HCT116 (cell line): ENCODE measurements at regions of chr6 and their contacts with region 1.

Region 1: DNA sequence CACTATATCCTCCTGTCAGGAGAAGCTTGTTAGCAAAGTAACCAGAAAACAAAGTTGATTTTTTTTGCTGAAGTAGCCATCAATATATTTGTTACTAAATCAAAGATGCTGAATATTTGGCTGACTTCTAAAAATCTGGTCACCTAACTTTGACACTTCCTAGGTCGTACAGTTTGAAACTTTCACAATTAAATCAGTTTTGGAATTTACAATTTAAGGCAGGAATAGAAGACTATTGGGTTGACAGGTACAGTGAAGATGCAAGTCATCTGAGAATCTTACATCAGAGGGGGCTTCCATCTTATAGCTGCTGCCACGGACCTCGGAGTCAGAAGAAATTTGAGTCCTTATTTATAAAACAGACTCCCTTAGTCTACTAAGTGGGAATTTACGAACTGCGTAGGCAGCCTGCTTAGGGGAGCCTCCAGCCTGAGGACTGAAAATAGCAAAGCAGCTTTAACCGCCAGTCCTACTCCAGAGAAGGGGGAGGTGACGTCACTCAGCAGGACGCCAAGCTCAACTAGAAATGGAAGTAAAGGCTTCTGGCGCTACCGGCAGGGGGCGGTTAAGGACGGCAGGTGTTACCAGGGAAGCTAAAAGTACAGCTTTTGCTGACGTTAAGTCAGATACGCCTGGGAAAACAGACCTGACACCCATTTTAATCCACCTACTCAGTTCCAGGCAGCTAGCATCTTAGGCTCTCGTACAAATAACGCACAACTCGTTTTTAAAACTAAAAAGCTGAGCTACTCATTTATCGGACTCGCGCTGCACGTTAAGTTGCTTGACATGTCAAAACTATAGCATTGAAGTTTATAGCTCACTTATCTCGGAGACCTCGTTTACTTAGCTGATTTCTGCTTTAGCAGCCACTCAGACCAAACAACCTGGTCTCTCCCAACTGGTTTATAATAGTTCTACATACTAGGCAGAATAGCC is 61.1 kb upstream of the HFE start:
- DNase-seq: peak; percentile 92
- ATAC-seq: peak; percentile 38
- H3K4me3 ChIP-seq: peak overlapping the region; percentile 52 to 66
- H3K27ac ChIP-seq: peak overlapping the region; percentile 98
- H3K4me1 ChIP-seq: peaks cover 51 to 84% of the 10 kb centered on the region in 2 experiments
- H3K27me3 ChIP-seq: no peaks in the 10 kb centered on the region
- CTCF ChIP-seq: peak in 2 of 3 experiments; percentile 84 to 89; a peak in 4 of 6 replicates
- POLR2A ChIP-seq: no peak
- RAD21 ChIP-seq: no peak

Region 2: DNA sequence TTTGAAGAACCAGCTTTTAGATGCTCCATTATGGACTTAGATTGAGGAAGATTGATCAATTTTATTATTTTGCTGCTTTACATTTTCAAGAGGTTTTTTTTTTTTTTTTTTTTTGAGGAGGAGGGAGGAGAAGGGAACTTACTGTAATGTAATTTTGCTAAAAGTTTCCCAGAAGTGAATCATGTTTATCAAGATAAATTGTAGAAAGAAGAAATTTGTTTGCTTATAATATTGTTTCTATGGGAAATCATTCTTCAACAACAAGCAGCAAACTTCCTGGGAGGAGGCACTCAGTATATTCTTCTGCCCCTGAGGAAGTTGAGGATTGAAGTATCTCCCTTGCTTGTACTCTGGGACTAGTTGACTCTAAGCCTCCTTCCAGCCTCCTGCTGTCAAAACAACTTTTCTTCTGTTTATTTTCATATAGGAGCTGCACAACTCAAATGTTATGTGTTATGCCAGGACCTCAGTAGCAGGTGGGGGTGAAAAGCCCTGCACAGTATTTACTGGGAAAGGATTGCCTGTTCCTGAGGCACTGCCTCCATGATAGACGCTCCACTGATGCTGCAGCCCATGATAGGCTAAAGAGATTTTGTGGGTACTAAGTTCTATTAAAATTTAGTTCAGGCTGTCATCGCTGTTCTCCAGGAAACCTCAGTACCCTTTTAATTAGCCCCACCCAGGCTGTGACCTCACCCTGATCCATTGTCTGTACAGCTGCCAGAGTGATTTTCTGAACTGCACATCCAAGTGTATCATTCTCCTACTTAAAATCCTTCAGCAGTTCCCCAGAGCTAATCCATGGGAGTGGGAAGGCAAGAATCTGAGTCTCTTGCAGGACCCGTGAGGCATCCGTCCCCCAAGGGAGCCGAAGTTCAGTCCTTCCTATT is 695.1 kb before region 1 on chr6:
- CTCF ChIA-PET with region 1: no interaction called
- POLR2A ChIA-PET with region 1: no interaction called
- RAD21 ChIA-PET with region 1: no interaction called
- intact Hi-C with region 1: no loop called
- DNase-seq: no peak
- ATAC-seq: no peak
- H3K4me3 ChIP-seq: no peak overlapping the region
- H3K27ac ChIP-seq: no peak overlapping the region
- H3K4me1 ChIP-seq: peaks cover 0 to 4% of the 10 kb centered on the region in 2 experiments; a peak in 1 of 4 replicates
- H3K27me3 ChIP-seq: no peaks in the 10 kb centered on the region
- CTCF ChIP-seq: no peak
- POLR2A ChIP-seq: no peak
- RAD21 ChIP-seq: no peak

Region 3: GRCh38 chr6:25596928-25597818 is 429.0 kb before region 1 on chr6:
- CTCF ChIA-PET with region 1: no interaction called
- POLR2A ChIA-PET with region 1: no interaction called
- RAD21 ChIA-PET with region 1: no interaction called
- intact Hi-C with region 1: no loop called
- DNase-seq: no peak
- ATAC-seq: no peak
- H3K4me3 ChIP-seq: no peak overlapping the region
- H3K27ac ChIP-seq: no peak overlapping the region
- H3K4me1 ChIP-seq: no peaks in the 10 kb centered on the region
- H3K27me3 ChIP-seq: no peaks in the 10 kb centered on the region
- CTCF ChIP-seq: no peak
- POLR2A ChIP-seq: no peak
- RAD21 ChIP-seq: no peak

Region 4: GRCh38 chr6:26003102-26003694 is 23.0 kb before region 1 on chr6:
- CTCF ChIA-PET with region 1: interaction called, 4 read pairs
- POLR2A ChIA-PET with region 1: interaction called, 19 read pairs
- RAD21 ChIA-PET with region 1: no interaction called
- intact Hi-C with region 1: no loop called
- DNase-seq: no peak
- ATAC-seq: peak; percentile 88
- H3K4me3 ChIP-seq: no peak overlapping the region
- H3K27ac ChIP-seq: no peak overlapping the region
- H3K4me1 ChIP-seq: no peaks in the 10 kb centered on the region
- H3K27me3 ChIP-seq: no peaks in the 10 kb centered on the region
- CTCF ChIP-seq: peak; percentile 51 to 72 (median 64); a peak in 5 of 6 replicates
- POLR2A ChIP-seq: no peak
- RAD21 ChIP-seq: peak; percentile 67

Region 5: GRCh38 chr6:26048590-26048989 is 22.4 kb after region 1 on chr6:
- CTCF ChIA-PET with region 1: interaction called, 4 read pairs
- POLR2A ChIA-PET with region 1: interaction called, 202 read pairs
- RAD21 ChIA-PET with region 1: no interaction called
- intact Hi-C with region 1: no loop called
- DNase-seq: no peak
- ATAC-seq: no peak
- H3K4me3 ChIP-seq: no peak overlapping the region
- H3K27ac ChIP-seq: no peak overlapping the region
- H3K4me1 ChIP-seq: peaks cover 19 to 27% of the 10 kb centered on the region in 2 experiments
- H3K27me3 ChIP-seq: no peaks in the 10 kb centered on the region
- CTCF ChIP-seq: no peak
- POLR2A ChIP-seq: no peak
- RAD21 ChIP-seq: no peak

Region 6: GRCh38 chr6:26065952-26066380 is 39.8 kb after region 1 on chr6:
- CTCF ChIA-PET with region 1: interaction called, 10 read pairs
- POLR2A ChIA-PET with region 1: interaction called, 66 read pairs
- RAD21 ChIA-PET with region 1: no interaction called
- intact Hi-C with region 1: no loop called
- DNase-seq: peak; percentile 79
- ATAC-seq: peak; percentile 81
- H3K4me3 ChIP-seq: no peak overlapping the region
- H3K27ac ChIP-seq: peak overlapping the region; percentile 37; the same call in 1 of the 2 replicates
- H3K4me1 ChIP-seq: peaks cover 18 to 29% of the 10 kb centered on the region in 2 experiments; a peak in 3 of 4 replicates
- H3K27me3 ChIP-seq: no peaks in the 10 kb centered on the region
- CTCF ChIP-seq: peak; percentile 77 to 92 (median 86)
- POLR2A ChIP-seq: no peak
- RAD21 ChIP-seq: peak; percentile 94

Region 7: GRCh38 chr6:26097268-26097875 is 71.2 kb after region 1 on chr6:
- CTCF ChIA-PET with region 1: interaction called, 10 read pairs
- POLR2A ChIA-PET with region 1: interaction called, 54 read pairs
- RAD21 ChIA-PET with region 1: no interaction called
- intact Hi-C with region 1: loop called (anchors 1 kb)
- DNase-seq: peak; percentile 55
- ATAC-seq: peak; percentile 93
- H3K4me3 ChIP-seq: no peak overlapping the region
- H3K27ac ChIP-seq: no peak overlapping the region
- H3K4me1 ChIP-seq: peaks cover 2 to 4% of the 10 kb centered on the region in 2 experiments; a peak in 3 of 4 replicates
- H3K27me3 ChIP-seq: no peaks in the 10 kb centered on the region
- CTCF ChIP-seq: peak; percentile 60 to 86 (median 86)
- POLR2A ChIP-seq: no peak
- RAD21 ChIP-seq: peak; percentile 85

Region 8: DNA sequence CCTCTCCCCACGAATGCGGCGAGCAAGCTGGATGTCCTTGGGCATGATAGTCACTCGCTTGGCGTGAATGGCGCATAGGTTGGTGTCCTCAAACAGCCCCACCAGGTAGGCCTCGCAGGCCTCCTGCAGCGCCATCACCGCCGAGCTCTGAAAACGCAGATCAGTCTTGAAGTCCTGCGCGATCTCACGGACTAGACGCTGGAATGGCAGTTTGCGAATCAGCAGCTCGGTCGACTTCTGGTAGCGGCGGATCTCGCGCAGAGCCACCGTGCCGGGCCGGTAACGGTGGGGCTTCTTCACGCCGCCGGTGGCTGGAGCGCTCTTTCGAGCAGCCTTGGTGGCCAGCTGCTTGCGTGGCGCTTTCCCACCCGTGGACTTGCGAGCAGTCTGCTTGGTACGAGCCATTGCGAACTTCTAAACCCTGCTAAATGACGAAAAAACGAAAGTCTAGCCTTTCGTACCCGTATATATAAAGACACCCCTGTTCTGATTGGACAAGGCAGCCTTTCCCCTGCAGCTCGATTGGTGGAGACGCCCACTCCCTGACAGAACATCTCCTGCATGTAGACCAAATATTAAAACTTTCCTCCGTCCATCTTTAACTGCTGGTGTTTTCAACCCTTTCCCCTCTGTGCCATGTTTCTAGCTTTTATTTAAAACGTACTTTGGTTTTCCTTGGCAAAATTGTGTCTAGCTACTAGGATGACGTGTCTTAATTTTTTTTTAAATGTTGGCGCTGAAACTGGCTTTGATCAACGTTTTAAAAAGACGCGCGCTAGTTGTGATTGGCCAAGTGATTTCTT is 170.9 kb after region 1 on chr6:
- CTCF ChIA-PET with region 1: no interaction called
- POLR2A ChIA-PET with region 1: interaction called, 44 read pairs
- RAD21 ChIA-PET with region 1: no interaction called
- intact Hi-C with region 1: loop called (anchors 2 kb)
- DNase-seq: peak; percentile 75
- ATAC-seq: peak; percentile 41
- H3K4me3 ChIP-seq: peak overlapping the region; percentile 70 to 76
- H3K27ac ChIP-seq: peak overlapping the region; percentile 98
- H3K4me1 ChIP-seq: peaks cover 13 to 37% of the 10 kb centered on the region in 2 experiments
- H3K27me3 ChIP-seq: no peaks in the 10 kb centered on the region
- CTCF ChIP-seq: no peak
- POLR2A ChIP-seq: peak; percentile 92
- RAD21 ChIP-seq: no peak